Heart left ventricle (tissue), 16 donors: ENCODE measurements at regions of chr13 and their contacts with region 1.

Region 1: GRCh38 chr13:24270639-24271141 is 38.7 kb upstream of the C1QTNF9 start:
- DNase-seq: peak; percentile 72 to 85 (median 79)
- ATAC-seq: peak; percentile 59 to 85 (median 76)
- H3K4me3 ChIP-seq: peak overlapping the region in 11 of 12 donors; percentile 8 to 64 (median 51)
- H3K27ac ChIP-seq: peak overlapping the region in 11 of 12 donors; percentile 73 to 93 (median 87)
- H3K4me1 ChIP-seq: peaks cover 2 to 91% (median 56%) of the 10 kb centered on the region in 12 donors
- H3K27me3 ChIP-seq: no peaks in the 10 kb centered on the region
- CTCF ChIP-seq: peak in 2 of 12 donors; percentile 10 to 24
- POLR2A ChIP-seq: no peak

Region 2: DNA sequence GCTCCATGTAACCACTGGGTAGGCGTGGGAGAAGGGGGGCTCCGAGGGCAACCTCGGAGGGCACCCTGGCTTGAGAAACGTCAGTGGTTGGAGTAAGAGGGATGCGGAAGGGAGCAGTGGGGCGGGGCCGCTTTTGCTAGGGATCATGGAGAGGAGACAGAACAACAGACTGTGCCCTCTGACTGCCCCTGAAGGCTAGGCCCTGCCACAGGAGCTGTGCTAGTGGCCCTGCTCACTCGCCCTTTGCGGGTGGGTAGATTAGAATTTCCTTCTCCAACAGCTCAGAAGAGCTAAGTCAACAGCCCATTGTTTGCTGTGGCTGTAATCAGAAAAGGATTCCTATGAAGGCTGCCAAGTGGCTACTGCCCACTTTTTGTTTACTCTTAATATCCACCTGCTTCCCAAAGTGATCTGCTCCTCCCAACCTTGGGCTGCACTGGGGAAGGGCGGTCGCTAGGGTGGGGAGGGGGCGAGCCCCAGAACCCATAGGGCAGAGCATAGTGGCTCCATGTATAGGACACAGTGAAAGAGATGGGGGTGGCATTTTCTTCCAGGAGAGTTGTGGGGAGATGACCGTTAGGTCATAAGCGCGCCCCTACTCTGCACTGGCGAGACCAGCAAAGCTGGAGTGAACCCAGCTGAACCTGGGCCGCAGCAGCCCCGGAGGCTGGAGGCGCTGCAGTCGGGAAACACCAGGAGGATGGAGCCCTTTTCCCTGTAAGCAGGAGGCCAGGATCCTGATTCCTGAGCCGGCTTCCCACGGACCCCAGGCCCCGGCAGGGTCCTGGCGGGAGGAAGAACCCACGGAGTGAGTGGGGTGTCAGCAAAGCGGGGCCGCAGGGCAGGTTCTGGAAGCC is 36.7 kb after region 1 on chr13:
- intact Hi-C with region 1: loop called in 1 of 10 experiments (anchors 5 kb)
- DNase-seq: no peak
- ATAC-seq: peak in 3 of 4 donors; percentile 48 to 66 (median 61)
- H3K4me3 ChIP-seq: no peak overlapping the region
- H3K27ac ChIP-seq: peak overlapping the region in 9 of 12 donors; percentile 3 to 68 (median 50)
- H3K4me1 ChIP-seq: peaks cover 0 to 64% (median 19%) of the 10 kb centered on the region in 12 donors
- H3K27me3 ChIP-seq: no peaks in the 10 kb centered on the region
- CTCF ChIP-seq: no peak
- POLR2A ChIP-seq: no peak